ENCODE measurements at regions of chr3 and their contacts with region 1.

Region 1: DNA sequence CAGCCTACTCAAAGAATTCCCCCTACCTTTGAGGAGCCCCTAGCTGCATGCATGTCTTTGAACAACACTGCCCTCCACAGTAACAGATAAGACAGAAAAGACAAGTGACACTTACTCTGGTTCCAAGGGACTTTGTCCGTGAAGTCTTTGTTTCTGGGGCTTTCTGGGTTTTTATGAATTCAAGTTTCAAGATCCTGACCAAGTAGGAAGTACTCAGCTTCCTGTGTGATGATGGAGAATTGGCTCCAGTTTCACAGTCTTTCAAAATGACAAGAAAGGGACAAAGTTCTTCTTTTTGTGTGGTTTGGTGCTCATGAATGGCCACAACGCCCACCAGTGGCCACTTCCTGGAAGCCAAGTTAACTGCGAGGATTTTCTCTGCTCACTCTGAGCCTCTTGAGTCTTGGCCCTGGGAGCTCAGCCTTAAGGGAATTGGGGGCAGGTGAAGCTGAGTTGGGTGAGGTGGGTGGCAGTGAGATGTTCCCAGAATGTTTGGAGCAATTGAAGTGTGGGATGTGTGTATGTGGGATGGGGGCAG is at the start of gene CCR1:
- DNase-seq: peak; percentile 78
- H3K4me3 Mint-ChIP-seq: peak within 1 kb of the TSS; percentile 71
- H3K27ac Mint-ChIP-seq: peak within 1 kb of the TSS; percentile 75
- H3K4me1 Mint-ChIP-seq: peaks cover 54% of the 10 kb centered on the region
- H3K27me3 Mint-ChIP-seq: no peaks in the 10 kb centered on the region
- total RNA-seq, gene CCR1: 20.0 to 20.7 TPM

Region 2: DNA sequence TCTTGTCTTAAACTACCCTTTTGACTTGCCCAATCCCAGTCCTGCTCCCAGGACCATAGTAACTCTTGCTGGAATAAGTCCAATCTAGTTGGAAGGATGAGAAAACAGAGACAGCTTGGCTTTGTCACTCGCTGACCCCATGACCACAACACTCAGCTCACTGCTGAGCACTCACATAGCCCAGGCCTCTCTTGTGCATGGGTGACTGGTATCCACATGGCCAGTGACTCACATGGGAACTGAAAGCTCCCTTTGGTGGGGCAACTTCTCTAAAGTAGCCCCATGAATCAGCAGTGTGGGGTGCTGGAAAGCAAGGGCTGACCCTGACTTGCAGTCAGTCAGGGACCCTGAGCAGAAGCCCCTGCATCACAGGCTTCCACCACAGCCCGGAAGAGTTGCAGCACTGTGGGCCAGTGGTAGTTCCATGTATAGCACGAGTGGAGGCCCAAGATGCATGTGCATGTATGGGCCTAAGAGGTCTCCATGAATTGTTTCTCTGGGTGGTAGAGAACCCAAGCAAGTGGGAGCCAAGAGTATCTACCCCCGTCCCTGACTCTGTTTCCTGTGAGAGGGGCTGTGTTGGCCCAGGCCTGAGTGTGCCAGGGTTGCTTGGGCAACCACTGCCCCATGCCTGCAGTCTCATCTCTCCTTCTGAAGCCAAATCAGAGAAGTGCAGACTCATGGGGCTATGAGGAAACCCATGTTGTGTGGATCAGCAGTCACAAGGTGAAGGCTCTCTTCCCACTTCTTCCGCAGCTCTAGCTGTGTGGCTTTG is 118.8 kb before region 1 on chr3:
- CTCF ChIA-PET with region 1: interaction called, 20 read pairs
- POLR2A ChIA-PET with region 1: interaction called, 8 read pairs
- DNase-seq: peak; percentile 29
- H3K4me3 Mint-ChIP-seq: no peak overlapping the region
- H3K27ac Mint-ChIP-seq: no peak overlapping the region
- H3K4me1 Mint-ChIP-seq: peaks cover 59% of the 10 kb centered on the region
- H3K27me3 Mint-ChIP-seq: peaks cover 27% of the 10 kb centered on the region

Region 3: GRCh38 chr3:46098319-46098761 is 109.9 kb before region 1 on chr3:
- CTCF ChIA-PET with region 1: interaction called, 34 read pairs
- POLR2A ChIA-PET with region 1: interaction called, 21 read pairs
- DNase-seq: peak; percentile 76
- H3K4me3 Mint-ChIP-seq: peak overlapping the region; percentile 52
- H3K27ac Mint-ChIP-seq: peak overlapping the region; percentile 96
- H3K4me1 Mint-ChIP-seq: peaks cover 70% of the 10 kb centered on the region
- H3K27me3 Mint-ChIP-seq: peaks cover 24% of the 10 kb centered on the region

Region 4: GRCh38 chr3:46163318-46164041 is 44.8 kb before region 1 on chr3:
- CTCF ChIA-PET with region 1: no interaction called
- POLR2A ChIA-PET with region 1: no interaction called
- DNase-seq: no peak
- H3K4me3 Mint-ChIP-seq: no peak overlapping the region
- H3K27ac Mint-ChIP-seq: no peak overlapping the region
- H3K4me1 Mint-ChIP-seq: no peaks in the 10 kb centered on the region
- H3K27me3 Mint-ChIP-seq: peaks cover 57% of the 10 kb centered on the region

Measured in activated CD4-positive, alpha-beta memory T cell treated with anti-CD3 and anti-CD28 coated beads, Interleukin-2, amount 10 ng/mL, durations not matched to agents 7 days and 5 days (primary cell).